Sigmoid colon (tissue), 7 donors: ENCODE measurements at regions of chr15 and their contacts with region 1.

Region 1: GRCh38 chr15:67109141-67110034 is 44.0 kb downstream of the SMAD3 start:
- DNase-seq: peak; percentile 86
- H3K4me3 ChIP-seq: no peak overlapping the region
- H3K27ac ChIP-seq: peak overlapping the region; percentile 32 to 88 (median 64)
- H3K4me1 ChIP-seq: peaks cover 0 to 64% (median 62%) of the 10 kb centered on the region in 4 donors
- H3K27me3 ChIP-seq: no peaks in the 10 kb centered on the region
- CTCF ChIP-seq: no peak
- EP300 ChIP-seq: peak in 2 of 4 donors; percentile 38 to 71
- POLR2A ChIP-seq: no peak

Region 2: DNA sequence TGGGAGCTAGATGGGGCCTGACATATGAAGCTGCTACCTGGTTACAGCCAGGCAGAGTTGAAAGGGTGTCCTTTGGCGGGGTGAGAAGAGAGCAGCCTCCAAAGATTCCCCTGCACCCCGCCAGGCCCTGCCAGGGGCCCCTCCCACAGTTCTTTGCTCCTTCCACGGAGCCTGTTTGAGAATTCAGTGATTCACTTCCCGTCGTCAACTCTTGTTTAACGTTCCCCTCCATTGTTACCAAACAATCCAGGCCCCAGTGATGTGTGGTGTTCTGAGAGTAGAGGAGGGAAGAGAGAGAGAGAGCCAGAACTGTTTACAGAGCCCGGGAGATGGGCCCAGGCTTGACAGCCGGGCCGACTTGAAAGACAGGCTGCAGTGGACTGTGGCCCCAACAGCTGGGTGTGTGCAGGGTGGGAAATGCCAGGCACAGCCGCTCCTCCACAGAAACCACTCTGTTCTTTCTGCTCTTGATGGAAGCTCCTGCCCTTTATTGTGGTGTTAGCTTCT is 37.5 kb after region 1 on chr15:
- intact Hi-C with region 1: loop called (anchors 5 kb)
- DNase-seq: peak; percentile 80
- H3K4me3 ChIP-seq: no peak overlapping the region
- H3K27ac ChIP-seq: peak overlapping the region; percentile 80 to 90 (median 84)
- H3K4me1 ChIP-seq: peaks cover 0 to 88% (median 79%) of the 10 kb centered on the region in 4 donors
- H3K27me3 ChIP-seq: no peaks in the 10 kb centered on the region
- CTCF ChIP-seq: no peak
- EP300 ChIP-seq: peak in 2 of 4 donors; percentile 17 to 45
- POLR2A ChIP-seq: no peak

Region 3: GRCh38 chr15:67161881-67162280 is 52.5 kb after region 1 on chr15:
- intact Hi-C with region 1: no loop called
- DNase-seq: peak; percentile 29
- H3K4me3 ChIP-seq: no peak overlapping the region
- H3K27ac ChIP-seq: no peak overlapping the region
- H3K4me1 ChIP-seq: peaks cover 0 to 32% (median 9%) of the 10 kb centered on the region in 4 donors
- H3K27me3 ChIP-seq: no peaks in the 10 kb centered on the region
- CTCF ChIP-seq: no peak
- EP300 ChIP-seq: no peak
- POLR2A ChIP-seq: no peak